K562 (cell line): ENCODE measurements at regions of chr1 and their contacts with region 1.

Region 1: GRCh38 chr1:11882814-11883538 is 24.2 kb upstream of the NPPB start:
- DNase-seq: peak; percentile 98 to 99 (median 98)
- ATAC-seq: peak; percentile 94
- H3K4me3 ChIP-seq: no peak overlapping the region
- H3K27ac ChIP-seq: peak overlapping the region; percentile 82
- H3K4me1 ChIP-seq: peaks cover 48 to 70% of the 10 kb centered on the region in 2 experiments
- H3K27me3 ChIP-seq: no peaks in the 10 kb centered on the region
- CTCF ChIP-seq: no peak
- EP300 ChIP-seq: peak; percentile 93
- POLR2A ChIP-seq: peak; percentile 75
- RAD21 ChIP-seq: peak in 1 of 2 experiments; percentile 47; a peak in 2 of 4 replicates

Region 2: DNA sequence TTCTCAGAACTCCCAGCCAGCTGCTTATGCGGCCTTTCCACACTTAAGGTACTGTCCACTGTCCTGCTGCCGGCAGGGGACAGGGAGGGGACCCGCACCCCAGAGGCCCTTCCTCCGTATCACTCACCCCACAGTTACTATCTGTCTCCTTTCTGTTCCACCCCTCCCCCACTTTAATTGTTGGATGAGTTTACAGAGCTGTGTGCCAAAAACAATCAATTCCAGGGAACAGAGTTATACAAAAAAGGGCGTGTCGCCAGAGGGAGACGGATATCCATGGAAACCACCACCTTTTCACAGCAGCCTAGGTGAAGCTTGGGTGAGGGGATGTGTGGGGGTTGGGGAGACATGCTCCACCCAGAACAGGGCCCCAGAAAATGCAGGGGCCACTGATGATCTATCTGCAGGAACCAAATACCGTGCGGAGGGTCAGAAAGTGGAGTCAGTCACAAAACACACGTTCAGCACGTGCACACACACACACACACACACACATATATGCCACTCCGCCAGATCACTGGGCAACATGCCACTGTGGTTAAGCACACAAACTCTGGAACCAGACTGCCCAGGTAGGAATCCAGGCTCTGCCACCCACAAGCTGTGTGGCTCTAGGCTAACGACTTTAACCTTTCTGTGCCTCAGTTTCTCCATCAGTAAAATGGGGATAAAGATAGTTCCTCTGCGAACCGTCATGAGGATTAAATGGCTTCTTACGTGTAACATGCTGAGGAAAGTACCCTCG is 1117.1 kb before region 1 on chr1:
- CTCF ChIA-PET with region 1: no interaction called
- POLR2A ChIA-PET with region 1: no interaction called
- in situ Hi-C with region 1: no loop called
- intact Hi-C with region 1: no loop called
- DNase-seq: no peak
- ATAC-seq: no peak
- H3K4me3 ChIP-seq: no peak overlapping the region
- H3K27ac ChIP-seq: no peak overlapping the region
- H3K4me1 ChIP-seq: no peaks in the 10 kb centered on the region; a peak in 1 of 5 replicates
- H3K27me3 ChIP-seq: peaks cover 66 to 96% of the 10 kb centered on the region in 2 experiments
- CTCF ChIP-seq: no peak
- EP300 ChIP-seq: no peak
- POLR2A ChIP-seq: no peak
- RAD21 ChIP-seq: no peak

Region 3: GRCh38 chr1:11661103-11661502 is 221.9 kb before region 1 on chr1:
- CTCF ChIA-PET with region 1: no interaction called
- POLR2A ChIA-PET with region 1: no interaction called
- in situ Hi-C with region 1: no loop called
- intact Hi-C with region 1: loop called (anchors 10 kb)
- DNase-seq: no peak
- ATAC-seq: no peak
- H3K4me3 ChIP-seq: no peak overlapping the region
- H3K27ac ChIP-seq: no peak overlapping the region
- H3K4me1 ChIP-seq: peaks cover 6 to 36% of the 10 kb centered on the region in 2 experiments; a peak in 4 of 5 replicates
- H3K27me3 ChIP-seq: no peaks in the 10 kb centered on the region
- CTCF ChIP-seq: no peak
- EP300 ChIP-seq: no peak
- POLR2A ChIP-seq: no peak
- RAD21 ChIP-seq: no peak

Region 4: DNA sequence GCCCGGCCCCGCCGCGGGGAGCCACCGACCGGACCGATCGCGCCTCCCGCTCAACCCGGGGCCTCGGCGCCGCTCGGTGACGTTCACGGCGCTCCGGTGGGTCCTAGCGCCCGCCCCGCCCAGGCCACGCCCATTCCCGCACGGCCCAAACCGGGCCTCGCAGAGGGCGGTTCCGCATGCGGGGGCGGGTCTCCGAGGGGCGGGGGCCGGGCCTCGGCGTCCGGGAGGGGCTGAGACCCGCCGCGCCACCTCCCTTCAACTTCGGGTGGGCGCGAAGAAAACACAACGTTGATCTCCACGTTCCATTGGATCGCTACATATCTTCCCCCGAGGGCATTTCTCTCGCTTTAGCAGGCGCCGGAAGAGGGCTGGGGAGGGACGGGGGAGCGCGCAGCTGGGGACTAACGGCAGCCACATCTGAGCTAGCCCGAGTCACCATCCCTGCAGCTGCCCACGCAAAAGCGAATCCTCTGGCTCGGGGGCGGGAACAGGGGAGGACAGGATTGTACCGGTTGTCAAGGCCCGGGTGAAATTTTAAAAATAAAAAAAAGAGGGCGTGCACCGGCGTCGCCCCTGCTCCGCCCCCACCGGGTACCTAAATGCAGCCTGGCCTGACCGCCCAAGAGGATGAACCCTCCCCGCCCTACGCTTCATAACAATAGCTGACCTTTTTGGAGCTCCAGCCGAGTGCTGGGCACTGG is 201.8 kb before region 1 on chr1 and contains the start of gene MAD2L2:
- CTCF ChIA-PET with region 1: no interaction called
- POLR2A ChIA-PET with region 1: no interaction called
- in situ Hi-C with region 1: no loop called
- intact Hi-C with region 1: no loop called
- DNase-seq: peak; percentile 95 to 99 (median 98)
- ATAC-seq: peak; percentile 94
- H3K4me3 ChIP-seq: peak within 1 kb of the TSS; percentile 99
- H3K27ac ChIP-seq: peak within 1 kb of the TSS; percentile 93
- H3K4me1 ChIP-seq: peaks cover 11 to 32% of the 10 kb centered on the region in 2 experiments
- H3K27me3 ChIP-seq: no peaks in the 10 kb centered on the region
- CTCF ChIP-seq: no peak
- EP300 ChIP-seq: peak; percentile 40; the same call in 1 of the 2 replicates
- POLR2A ChIP-seq: peak; percentile 81
- RAD21 ChIP-seq: no peak
- polyA plus RNA-seq, gene MAD2L2: 12.4 to 25.9 TPM

Region 5: DNA sequence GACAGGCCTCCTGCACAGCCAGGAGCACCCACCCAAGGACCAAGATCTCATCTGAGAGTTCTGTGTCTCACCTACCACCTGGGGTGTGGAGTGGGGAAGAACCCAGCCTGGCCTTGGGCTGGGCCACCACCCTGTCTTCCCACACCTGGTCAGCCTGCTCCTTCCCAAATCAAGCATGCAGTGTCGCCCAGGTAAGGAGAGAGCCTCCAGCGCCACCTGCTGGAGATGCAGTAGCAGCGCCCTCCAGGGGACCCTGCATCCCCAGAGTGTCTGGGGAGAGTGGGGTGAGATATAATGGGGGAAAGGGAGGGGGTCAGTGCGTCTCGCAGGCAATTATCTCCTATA is 10.9 kb after region 1 on chr1:
- CTCF ChIA-PET with region 1: no interaction called
- POLR2A ChIA-PET with region 1: interaction called, 6 read pairs
- in situ Hi-C with region 1: no loop called
- intact Hi-C with region 1: loop called (anchors 1 kb)
- DNase-seq: peak; percentile 88 to 94 (median 93)
- ATAC-seq: peak; percentile 98
- H3K4me3 ChIP-seq: no peak overlapping the region
- H3K27ac ChIP-seq: no peak overlapping the region
- H3K4me1 ChIP-seq: peaks cover 6 to 24% of the 10 kb centered on the region in 2 experiments; a peak in 4 of 5 replicates
- H3K27me3 ChIP-seq: peaks cover 8 to 9% of the 10 kb centered on the region in 2 experiments; a peak in 4 of 5 replicates
- CTCF ChIP-seq: peak; percentile 97 to 99 (median 98)
- EP300 ChIP-seq: no peak
- POLR2A ChIP-seq: no peak
- RAD21 ChIP-seq: peak; percentile 97 to 100